Activated T-helper 1 cell treated with anti-CD3 and anti-CD28 coated beads, Interleukin-12 subunit alpha, Interleukin-12 subunit beta, Interleukin-2, Interleukin-4 antibody, amounts not matched to agents 30 ng/mL and 10 ng/mL and 1 ng/mL, durations not matched to agents 14 hours and 24 hours and 36 hours (primary cell): ENCODE measurements at regions of chr3 and their contacts with region 1.

Region 1: GRCh38 chr3:47380601-47381316 is at the start of gene PTPN23:
- DNase-seq: peak; percentile 99
- H3K4me3 Mint-ChIP-seq: peak within 1 kb of the TSS; percentile 100
- H3K27ac Mint-ChIP-seq: peak within 1 kb of the TSS; percentile 100
- H3K4me1 Mint-ChIP-seq: peaks cover 43% of the 10 kb centered on the region
- H3K27me3 Mint-ChIP-seq: no peaks in the 10 kb centered on the region
- total RNA-seq, gene PTPN23: 33.7 and 35.1 TPM in 2 replicates

Region 2: DNA sequence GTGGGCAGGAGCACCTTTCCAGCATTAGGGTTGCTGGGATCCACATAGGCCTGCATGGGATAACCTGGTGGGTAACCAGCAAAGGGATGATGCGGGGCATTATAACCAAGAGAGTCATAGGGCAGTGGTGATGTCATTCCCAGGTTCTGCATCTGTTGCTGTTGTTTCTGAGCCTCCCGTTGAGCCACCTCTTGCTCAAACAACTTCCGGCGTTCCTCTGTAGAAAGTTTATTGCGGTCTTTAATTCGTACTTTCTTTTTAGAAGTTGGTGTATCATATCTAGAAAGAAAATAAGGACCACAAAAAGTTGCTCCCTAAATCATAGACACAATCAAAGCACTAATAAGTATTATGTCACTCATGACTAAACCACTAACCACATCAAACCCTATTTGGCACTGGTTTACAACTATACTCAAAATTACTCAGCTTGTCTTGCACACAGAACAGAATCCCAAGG is 323.5 kb before region 1 on chr3:
- intact Hi-C with region 1: loop called (anchors 5 kb)
- DNase-seq: peak; percentile 37
- H3K4me3 Mint-ChIP-seq: no peak overlapping the region
- H3K27ac Mint-ChIP-seq: peak overlapping the region; percentile 55
- H3K4me1 Mint-ChIP-seq: peaks cover 41% of the 10 kb centered on the region
- H3K27me3 Mint-ChIP-seq: no peaks in the 10 kb centered on the region

Region 3: GRCh38 chr3:47221798-47222197 is 159.0 kb before region 1 on chr3:
- intact Hi-C with region 1: no loop called
- DNase-seq: no peak
- H3K4me3 Mint-ChIP-seq: no peak overlapping the region
- H3K27ac Mint-ChIP-seq: no peak overlapping the region
- H3K4me1 Mint-ChIP-seq: no peaks in the 10 kb centered on the region
- H3K27me3 Mint-ChIP-seq: no peaks in the 10 kb centered on the region

Region 4: GRCh38 chr3:47324278-47324865 is 56.4 kb before region 1 on chr3:
- intact Hi-C with region 1: no loop called
- DNase-seq: peak; percentile 23
- H3K4me3 Mint-ChIP-seq: no peak overlapping the region
- H3K27ac Mint-ChIP-seq: no peak overlapping the region
- H3K4me1 Mint-ChIP-seq: no peaks in the 10 kb centered on the region
- H3K27me3 Mint-ChIP-seq: no peaks in the 10 kb centered on the region

Region 5: GRCh38 chr3:47420511-47421484 is 40.0 kb after region 1 on chr3:
- intact Hi-C with region 1: loop called (anchors 1 kb)
- DNase-seq: peak; percentile 83
- H3K4me3 Mint-ChIP-seq: peak overlapping the region; percentile 43
- H3K27ac Mint-ChIP-seq: peak overlapping the region; percentile 98
- H3K4me1 Mint-ChIP-seq: peaks cover 22% of the 10 kb centered on the region
- H3K27me3 Mint-ChIP-seq: no peaks in the 10 kb centered on the region

Region 6: GRCh38 chr3:47475570-47476329 is 95.0 kb after region 1 on chr3 and contains the start of gene SCAP:
- intact Hi-C with region 1: loop called (anchors 1 kb)
- DNase-seq: peak; percentile 95
- H3K4me3 Mint-ChIP-seq: peak within 1 kb of the TSS; percentile 92
- H3K27ac Mint-ChIP-seq: peak within 1 kb of the TSS; percentile 93
- H3K4me1 Mint-ChIP-seq: peaks cover 26% of the 10 kb centered on the region
- H3K27me3 Mint-ChIP-seq: no peaks in the 10 kb centered on the region
- total RNA-seq, gene SCAP: 86.3 and 91.2 TPM in 2 replicates

Region 7: DNA sequence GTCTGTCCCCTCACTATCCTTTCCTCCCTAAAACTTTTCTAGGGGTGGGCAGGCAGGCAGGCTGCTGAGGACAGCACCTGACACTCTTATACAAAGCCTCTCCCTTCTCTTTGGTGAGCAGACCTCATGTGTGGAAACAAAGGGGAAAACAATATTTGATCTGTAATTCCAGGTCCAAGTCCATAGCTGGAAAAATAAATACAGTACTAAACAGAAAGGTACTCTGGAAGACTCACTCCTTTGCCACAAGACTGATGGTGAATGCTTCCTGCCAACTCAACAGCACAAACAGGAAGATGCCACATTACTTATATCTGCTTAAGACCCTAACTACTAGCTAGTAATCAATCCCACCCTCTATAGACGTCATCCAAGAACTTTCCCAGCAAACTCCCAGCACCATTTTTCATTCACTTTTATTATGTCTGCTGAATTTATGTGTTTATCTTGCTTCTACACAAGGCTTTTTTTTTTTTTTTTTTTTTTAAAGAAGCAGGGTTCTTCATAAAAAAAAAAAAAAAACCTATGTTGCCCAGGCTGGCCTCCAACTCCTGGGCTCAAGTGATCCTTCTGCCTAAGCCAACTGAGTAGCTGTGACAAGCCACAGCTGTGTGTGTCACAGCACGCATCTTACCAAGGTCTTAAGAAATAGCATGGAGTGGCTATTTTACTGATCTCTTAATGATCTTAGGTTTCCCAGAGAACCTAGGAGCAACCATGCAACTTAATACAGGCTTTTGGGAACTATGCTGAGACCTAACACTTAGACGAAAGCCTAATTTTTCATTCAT is 242.1 kb after region 1 on chr3:
- intact Hi-C with region 1: no loop called
- DNase-seq: no peak
- H3K4me3 Mint-ChIP-seq: no peak overlapping the region
- H3K27ac Mint-ChIP-seq: no peak overlapping the region
- H3K4me1 Mint-ChIP-seq: peaks cover 4% of the 10 kb centered on the region
- H3K27me3 Mint-ChIP-seq: no peaks in the 10 kb centered on the region

Region 8: GRCh38 chr3:47802734-47803477 is 422.1 kb after region 1 on chr3 and contains the start of gene DHX30:
- intact Hi-C with region 1: loop called (anchors 2 kb)
- DNase-seq: peak; percentile 82
- H3K4me3 Mint-ChIP-seq: peak within 1 kb of the TSS; percentile 93
- H3K27ac Mint-ChIP-seq: peak within 1 kb of the TSS; percentile 95
- H3K4me1 Mint-ChIP-seq: peaks cover 19% of the 10 kb centered on the region
- H3K27me3 Mint-ChIP-seq: no peaks in the 10 kb centered on the region
- total RNA-seq, gene DHX30: 149 and 154 TPM in 2 replicates